ENCODE measurements at regions of chr9 and their contacts with region 1.

Region 1: DNA sequence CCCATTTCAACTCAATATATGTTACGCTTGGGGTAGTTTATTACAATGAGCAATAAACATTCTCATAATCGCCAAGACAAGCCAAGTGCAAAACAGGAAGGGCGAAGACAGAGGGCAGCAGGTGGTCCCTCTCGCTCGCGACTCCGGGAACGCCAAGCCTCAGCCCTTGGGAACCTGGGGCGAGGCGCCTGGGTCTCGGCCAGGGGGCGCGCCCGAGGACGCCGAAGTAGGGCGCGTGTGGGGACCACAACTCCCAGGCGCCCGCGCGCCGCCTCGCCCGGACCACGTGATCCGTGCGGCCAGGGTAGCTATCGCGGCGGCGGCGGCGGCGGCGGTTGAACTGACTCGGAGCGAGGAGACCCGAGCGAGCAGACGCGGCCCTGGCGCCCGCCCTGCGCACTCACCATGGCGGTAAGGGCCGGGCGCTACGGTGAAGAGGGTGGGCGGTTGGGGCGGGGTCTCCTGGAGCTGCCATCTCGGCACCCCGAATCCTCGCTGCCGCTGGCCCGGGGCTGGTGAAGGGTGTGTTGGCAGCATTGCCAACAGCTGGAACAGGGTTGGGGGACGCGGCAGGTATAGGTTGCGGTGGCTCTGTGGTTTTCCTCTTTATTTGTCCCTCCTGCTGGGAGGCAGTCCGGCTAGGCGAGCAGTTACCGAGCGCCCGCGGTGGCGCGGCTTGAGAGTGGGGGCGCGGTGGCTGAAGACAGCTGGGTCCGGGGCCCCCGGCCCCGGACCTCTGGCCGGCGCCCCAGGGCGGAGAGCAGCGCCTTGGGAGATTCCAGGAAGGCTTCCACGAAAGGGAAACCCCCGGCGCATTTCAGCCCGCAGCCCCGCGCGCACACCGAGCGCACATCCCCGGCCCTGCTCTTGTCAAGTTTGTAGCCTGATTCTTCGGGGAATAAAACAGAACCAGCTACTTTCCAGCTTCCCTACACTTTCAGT is at the start of gene SLC31A2:
- DNase-seq: no peak
- H3K4me3 ChIP-seq: peak within 1 kb of the TSS; percentile 94
- H3K27me3 ChIP-seq: peaks cover 4% of the 10 kb centered on the region; the same call in 1 of the 2 replicates
- CTCF ChIP-seq: peak; percentile 43; the same call in 1 of the 2 replicates
- polyA plus RNA-seq, gene SLC31A2: 8.7 and 10.7 TPM in 2 replicates

Region 2: GRCh38 chr9:112527959-112528358 is 623.0 kb before region 1 on chr9:
- CTCF ChIA-PET with region 1: no interaction called
- POLR2A ChIA-PET with region 1: interaction called, 21 read pairs
- DNase-seq: no peak
- H3K4me3 ChIP-seq: no peak overlapping the region
- H3K27me3 ChIP-seq: no peaks in the 10 kb centered on the region
- CTCF ChIP-seq: no peak

Region 3: GRCh38 chr9:113131689-113132151 is 19.2 kb before region 1 on chr9:
- CTCF ChIA-PET with region 1: no interaction called
- POLR2A ChIA-PET with region 1: no interaction called
- DNase-seq: no peak
- H3K4me3 ChIP-seq: no peak overlapping the region
- H3K27me3 ChIP-seq: no peaks in the 10 kb centered on the region
- CTCF ChIP-seq: no peak

Region 4: DNA sequence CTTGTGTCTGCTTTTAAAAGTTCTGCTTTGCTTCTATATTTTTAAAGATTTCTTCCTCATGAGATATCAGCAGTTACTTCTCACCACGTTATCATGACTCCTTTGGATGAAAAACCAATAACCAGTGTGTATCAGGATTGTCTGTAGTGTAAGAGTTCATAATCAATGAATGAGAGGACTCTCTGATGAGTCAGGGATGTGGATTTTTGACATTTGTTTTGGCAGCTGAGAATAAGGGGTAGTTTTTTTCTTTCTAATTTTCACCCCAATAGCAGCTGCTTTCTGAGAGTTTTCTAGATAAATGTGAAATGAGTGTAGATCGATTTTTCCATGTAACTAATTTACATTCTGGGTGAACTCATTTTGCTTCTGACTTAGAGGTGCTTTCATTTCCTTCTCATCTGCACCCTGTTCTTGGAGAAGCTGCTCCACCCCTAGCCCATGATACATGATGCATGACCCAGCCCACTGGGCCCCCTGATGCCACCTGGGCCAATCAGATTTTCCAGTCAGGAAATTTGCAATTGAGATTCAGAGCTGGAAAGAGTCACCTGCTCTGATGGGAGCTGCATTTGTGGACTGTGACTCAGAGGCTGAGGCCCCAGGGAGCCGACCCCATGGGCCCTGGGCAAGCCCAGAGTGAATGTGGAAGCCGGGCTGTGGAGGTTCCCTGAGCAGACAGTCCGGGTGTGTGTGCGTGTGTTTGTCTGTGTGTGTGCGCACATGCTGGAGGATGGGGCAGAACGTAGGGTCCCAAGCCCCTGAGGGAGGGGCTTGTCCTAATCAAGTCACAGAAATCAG is 471.9 kb after region 1 on chr9:
- CTCF ChIA-PET with region 1: no interaction called
- POLR2A ChIA-PET with region 1: interaction called, 14 read pairs
- DNase-seq: no peak
- H3K4me3 ChIP-seq: no peak overlapping the region
- H3K27me3 ChIP-seq: no peaks in the 10 kb centered on the region
- CTCF ChIP-seq: no peak

Measured in BJ (cell line).